Caco-2 (cell line): ENCODE measurements at regions of chr5 and their contacts with region 1.

Region 1: GRCh38 chr5:7927466-7928375 is 58.8 kb downstream of the MTRR start:
- DNase-seq: peak; percentile 72 to 73
- H3K4me3 ChIP-seq: no peak overlapping the region
- H3K4me3 Mint-ChIP-seq: no peak overlapping the region
- H3K27ac Mint-ChIP-seq: no peak overlapping the region
- H3K4me1 ChIP-seq: no peaks in the 10 kb centered on the region
- H3K4me1 Mint-ChIP-seq: no peaks in the 10 kb centered on the region
- H3K27me3 ChIP-seq: no peaks in the 10 kb centered on the region
- H3K27me3 Mint-ChIP-seq: peaks cover 14% of the 10 kb centered on the region
- CTCF ChIP-seq: peak; percentile 66 to 77

Region 2: GRCh38 chr5:8114597-8115266 is 187.0 kb after region 1 on chr5:
- CTCF ChIA-PET with region 1: no interaction called
- POLR2A ChIA-PET with region 1: no interaction called
- intact Hi-C with region 1: loop called (anchors 1 kb)
- DNase-seq: peak in 1 of 2 experiments; percentile 4
- H3K4me3 ChIP-seq: no peak overlapping the region
- H3K4me3 Mint-ChIP-seq: no peak overlapping the region
- H3K27ac Mint-ChIP-seq: no peak overlapping the region
- H3K4me1 ChIP-seq: no peaks in the 10 kb centered on the region
- H3K4me1 Mint-ChIP-seq: no peaks in the 10 kb centered on the region
- H3K27me3 ChIP-seq: no peaks in the 10 kb centered on the region
- H3K27me3 Mint-ChIP-seq: no peaks in the 10 kb centered on the region
- CTCF ChIP-seq: peak in 1 of 2 experiments; percentile 21

Region 3: DNA sequence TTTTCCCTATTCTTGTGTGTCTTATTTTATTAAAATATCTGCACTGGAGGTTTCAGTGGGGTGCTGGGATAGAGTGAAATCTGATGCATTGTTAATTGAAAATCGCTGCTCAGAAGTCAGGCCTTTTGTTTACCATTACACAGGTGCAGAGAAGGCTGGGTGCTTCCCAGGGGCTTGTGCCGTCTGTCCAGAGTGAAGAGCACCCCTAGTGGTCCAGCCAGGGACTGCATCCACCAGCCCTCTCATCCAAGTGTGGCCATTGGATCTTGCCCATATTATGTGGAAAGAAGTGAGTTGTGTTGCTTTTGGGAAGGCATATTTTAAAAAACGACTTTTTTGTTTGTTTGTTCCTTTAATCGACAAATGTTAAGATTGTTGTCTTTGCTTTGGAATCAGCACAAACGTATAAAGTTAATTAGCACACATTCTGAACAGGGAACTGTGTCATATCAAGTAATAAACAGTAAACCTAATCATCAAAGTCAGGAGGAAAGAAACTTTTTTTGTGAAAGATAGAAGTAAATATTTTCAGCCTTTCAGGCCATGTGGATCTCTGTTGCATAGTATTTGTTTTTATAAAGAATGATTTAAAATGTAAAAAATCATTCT is 256.8 kb after region 1 on chr5:
- CTCF ChIA-PET with region 1: no interaction called
- POLR2A ChIA-PET with region 1: no interaction called
- intact Hi-C with region 1: loop called (anchors 5 kb)
- DNase-seq: peak; percentile 52 to 69
- H3K4me3 ChIP-seq: no peak overlapping the region
- H3K4me3 Mint-ChIP-seq: no peak overlapping the region
- H3K27ac Mint-ChIP-seq: no peak overlapping the region
- H3K4me1 ChIP-seq: no peaks in the 10 kb centered on the region
- H3K4me1 Mint-ChIP-seq: no peaks in the 10 kb centered on the region
- H3K27me3 ChIP-seq: no peaks in the 10 kb centered on the region; the same call in 1 of the 2 replicates
- H3K27me3 Mint-ChIP-seq: peaks cover 14% of the 10 kb centered on the region
- CTCF ChIP-seq: peak; percentile 86 to 89

Region 4: GRCh38 chr5:8429778-8430758 is 502.3 kb after region 1 on chr5:
- CTCF ChIA-PET with region 1: no interaction called
- POLR2A ChIA-PET with region 1: no interaction called
- intact Hi-C with region 1: loop called (anchors 10 kb)
- DNase-seq: no peak
- H3K4me3 ChIP-seq: no peak overlapping the region
- H3K4me3 Mint-ChIP-seq: no peak overlapping the region
- H3K27ac Mint-ChIP-seq: no peak overlapping the region
- H3K4me1 ChIP-seq: no peaks in the 10 kb centered on the region
- H3K4me1 Mint-ChIP-seq: no peaks in the 10 kb centered on the region
- H3K27me3 ChIP-seq: no peaks in the 10 kb centered on the region
- H3K27me3 Mint-ChIP-seq: peaks cover 5% of the 10 kb centered on the region
- CTCF ChIP-seq: no peak